Activated naive CD4-positive, alpha-beta T cell treated with anti-CD3 and anti-CD28 coated beads for 36 hours (primary cell): ENCODE measurements at regions of chr15 and their contacts with region 1.

Region 1: GRCh38 chr15:86743283-86743903 is 663.7 kb downstream of the AGBL1 start:
- DNase-seq: peak; percentile 62
- H3K4me3 Mint-ChIP-seq: no peak overlapping the region
- H3K27ac Mint-ChIP-seq: no peak overlapping the region
- H3K4me1 Mint-ChIP-seq: no peaks in the 10 kb centered on the region
- H3K27me3 Mint-ChIP-seq: no peaks in the 10 kb centered on the region

Region 2: DNA sequence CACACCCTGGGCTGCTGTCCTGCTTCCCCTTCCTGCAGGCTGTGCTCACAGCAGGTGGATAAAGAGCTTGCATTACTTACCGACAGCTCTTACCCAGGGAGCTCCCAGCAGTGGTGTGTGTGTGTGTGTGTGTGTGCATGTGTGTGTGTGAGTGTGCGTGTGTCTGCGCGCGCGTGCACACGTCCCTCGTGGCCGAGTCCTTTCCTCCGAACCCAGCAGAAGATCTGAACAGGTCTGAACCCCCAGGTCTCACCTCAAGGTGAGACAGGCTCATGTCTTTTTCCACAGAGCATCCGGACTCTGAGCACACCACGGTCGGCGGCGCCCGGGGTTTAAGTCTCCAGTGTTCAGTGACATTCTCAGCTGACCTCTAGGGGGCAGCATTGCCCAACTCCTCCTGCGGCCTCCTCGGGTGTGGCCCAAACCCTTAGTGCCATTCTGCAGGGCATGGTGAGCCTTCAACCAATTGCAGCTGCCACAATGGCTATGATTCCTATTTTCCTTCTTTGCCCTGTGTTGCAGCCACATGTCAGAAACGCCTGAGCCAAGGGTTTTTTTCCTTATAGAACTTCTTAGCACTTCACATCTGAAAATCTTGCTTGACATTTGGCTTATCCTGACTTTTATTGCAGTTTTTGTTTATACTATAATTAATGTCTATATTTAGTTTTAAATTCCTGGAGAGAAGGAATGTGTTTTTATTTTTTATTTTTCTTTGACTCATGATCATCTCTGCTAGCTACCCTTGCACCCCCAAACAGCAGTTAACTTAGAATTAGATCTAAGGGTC is 884.6 kb before region 1 on chr15:
- CTCF ChIA-PET with region 1: interaction called, 3 read pairs
- intact Hi-C with region 1: loop called (anchors 2 kb)
- DNase-seq: peak; percentile 87
- H3K4me3 Mint-ChIP-seq: peak overlapping the region; percentile 67
- H3K27ac Mint-ChIP-seq: no peak overlapping the region
- H3K4me1 Mint-ChIP-seq: peaks cover 2% of the 10 kb centered on the region
- H3K27me3 Mint-ChIP-seq: peaks cover 13% of the 10 kb centered on the region

Region 3: DNA sequence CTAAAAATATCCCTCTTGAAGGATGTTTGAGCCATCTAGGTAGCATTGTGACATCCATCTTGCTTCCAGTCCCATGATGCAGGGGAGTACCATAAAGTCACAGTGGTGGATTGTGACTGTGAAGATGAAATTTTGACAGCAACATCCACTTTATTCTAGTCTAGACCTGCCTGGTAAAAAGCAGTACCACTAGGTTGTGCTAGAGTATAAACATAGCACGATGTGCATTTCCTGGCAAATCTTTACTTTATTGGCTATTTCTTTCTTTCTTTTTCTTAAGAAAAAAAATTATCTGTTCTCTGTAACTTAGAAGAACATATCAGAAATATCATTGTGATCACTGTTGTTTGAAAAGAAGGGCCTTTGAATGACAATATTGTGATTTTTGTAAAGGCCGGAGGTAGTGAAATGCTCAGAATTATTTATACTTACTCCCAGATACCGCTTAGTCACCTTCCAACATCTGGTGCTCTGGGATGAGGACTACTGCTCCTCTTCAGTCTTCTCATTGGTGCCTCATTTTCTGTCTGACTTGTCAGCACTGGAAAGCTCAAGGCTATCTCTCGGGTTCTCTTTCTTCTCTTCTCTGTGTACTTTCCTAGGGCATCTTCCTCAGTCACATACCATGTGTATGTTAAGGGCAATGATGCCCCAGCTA is 628.1 kb before region 1 on chr15:
- CTCF ChIA-PET with region 1: no interaction called
- intact Hi-C with region 1: no loop called
- DNase-seq: no peak
- H3K4me3 Mint-ChIP-seq: no peak overlapping the region
- H3K27ac Mint-ChIP-seq: no peak overlapping the region
- H3K4me1 Mint-ChIP-seq: no peaks in the 10 kb centered on the region
- H3K27me3 Mint-ChIP-seq: peaks cover 8% of the 10 kb centered on the region

Region 4: DNA sequence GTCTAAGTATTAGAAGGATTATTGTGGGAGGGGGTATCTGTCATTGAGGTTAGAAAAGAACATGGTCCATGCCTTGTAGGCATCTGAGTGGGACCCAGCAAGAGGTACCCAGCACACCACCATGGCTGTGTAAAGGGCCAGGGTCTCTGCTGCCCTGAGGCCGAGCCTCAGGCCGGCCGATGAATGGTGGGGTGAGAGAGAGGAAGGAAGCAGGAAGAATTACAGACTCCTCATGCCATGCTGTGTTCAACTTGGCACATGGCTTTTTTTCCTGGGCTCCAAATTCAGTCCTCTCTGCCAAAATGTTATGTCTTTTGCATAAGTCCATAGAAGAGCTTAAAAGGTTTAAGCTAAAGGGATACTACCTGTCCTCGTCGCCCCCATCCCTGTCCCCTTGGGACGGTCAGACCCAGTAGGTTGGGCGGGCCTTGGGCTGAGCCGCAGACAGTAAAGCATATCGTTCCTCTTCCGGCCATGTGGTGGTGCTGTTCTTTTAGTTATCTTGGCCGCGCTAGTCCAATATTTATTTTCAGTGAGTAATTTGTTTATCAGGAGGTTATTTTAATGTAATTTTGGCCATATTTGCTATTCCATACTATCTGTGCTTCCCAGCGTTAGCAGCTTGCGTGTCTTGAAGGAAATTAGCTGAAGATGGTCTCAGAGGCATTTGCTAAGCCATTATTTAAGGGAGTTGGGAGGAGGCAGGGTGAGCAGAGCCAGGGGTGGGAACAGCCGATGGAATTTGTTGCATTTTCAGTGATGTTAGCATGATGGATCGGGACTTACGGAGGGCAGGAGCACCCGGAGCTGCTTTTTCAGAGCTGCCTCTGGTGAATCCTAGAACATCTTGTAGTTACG is 511.3 kb before region 1 on chr15:
- CTCF ChIA-PET with region 1: interaction called, 3 read pairs
- intact Hi-C with region 1: loop called (anchors 5 kb)
- DNase-seq: peak; percentile 49
- H3K4me3 Mint-ChIP-seq: no peak overlapping the region
- H3K27ac Mint-ChIP-seq: no peak overlapping the region
- H3K4me1 Mint-ChIP-seq: peaks cover 4% of the 10 kb centered on the region
- H3K27me3 Mint-ChIP-seq: peaks cover 30% of the 10 kb centered on the region

Region 5: GRCh38 chr15:86595741-86596140 is 147.7 kb before region 1 on chr15:
- CTCF ChIA-PET with region 1: no interaction called
- intact Hi-C with region 1: no loop called
- DNase-seq: no peak
- H3K4me3 Mint-ChIP-seq: no peak overlapping the region
- H3K27ac Mint-ChIP-seq: no peak overlapping the region
- H3K4me1 Mint-ChIP-seq: no peaks in the 10 kb centered on the region
- H3K27me3 Mint-ChIP-seq: no peaks in the 10 kb centered on the region

Region 6: GRCh38 chr15:86650093-86650492 is 93.3 kb before region 1 on chr15:
- CTCF ChIA-PET with region 1: interaction called, 3 read pairs
- intact Hi-C with region 1: loop called (anchors 1 kb)
- DNase-seq: peak; percentile 14
- H3K4me3 Mint-ChIP-seq: no peak overlapping the region
- H3K27ac Mint-ChIP-seq: no peak overlapping the region
- H3K4me1 Mint-ChIP-seq: peaks cover 50% of the 10 kb centered on the region
- H3K27me3 Mint-ChIP-seq: no peaks in the 10 kb centered on the region